MCF 10A (cell line): ENCODE measurements at regions of chr14 and their contacts with region 1.

Region 1: GRCh38 chr14:86961106-86961716 is 1031.8 kb downstream of the GALC start:
- DNase-seq: peak; percentile 34
- H3K4me3 Mint-ChIP-seq: no peak overlapping the region
- H3K27ac Mint-ChIP-seq: no peak overlapping the region
- H3K4me1 Mint-ChIP-seq: no peaks in the 10 kb centered on the region
- H3K27me3 Mint-ChIP-seq: no peaks in the 10 kb centered on the region
- CTCF ChIP-seq: peak; percentile 45

Region 2: DNA sequence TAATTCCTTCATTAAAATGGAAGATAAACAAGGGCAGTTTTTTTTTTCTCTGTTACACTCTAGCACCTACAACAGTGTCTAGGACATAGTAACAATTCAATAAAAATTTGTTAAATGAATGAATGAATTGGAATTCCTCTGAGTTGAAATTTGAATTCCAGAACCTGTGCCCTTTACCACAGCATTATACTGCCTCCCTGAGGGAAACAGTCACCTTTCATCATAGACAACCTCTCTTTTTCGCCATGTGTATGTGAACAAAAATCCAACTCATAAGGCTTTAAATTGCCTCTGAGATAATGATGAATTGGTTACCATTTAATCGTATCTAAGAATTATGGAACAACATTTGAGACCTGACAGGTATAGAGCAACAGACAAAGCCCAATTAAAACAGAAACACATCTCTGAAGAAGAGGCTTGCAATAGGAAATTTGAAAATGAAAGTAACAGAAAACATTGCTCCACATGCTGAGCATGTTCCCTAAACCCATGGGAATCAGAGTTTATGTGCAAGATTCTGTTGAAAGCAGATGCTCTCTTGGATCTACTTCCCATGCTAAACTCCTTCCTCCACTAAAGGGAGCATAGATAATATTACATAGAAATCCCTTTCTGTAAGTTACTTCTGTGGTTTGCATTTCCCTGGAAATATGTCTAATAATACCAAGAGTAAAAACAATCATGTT is 373.9 kb after region 1 on chr14:
- CTCF ChIA-PET with region 1: no interaction called
- POLR2A ChIA-PET with region 1: no interaction called
- intact Hi-C with region 1: loop called (anchors 2 kb)
- DNase-seq: peak; percentile 40
- H3K4me3 Mint-ChIP-seq: peak overlapping the region; percentile 66
- H3K27ac Mint-ChIP-seq: no peak overlapping the region
- H3K4me1 Mint-ChIP-seq: peaks cover 14% of the 10 kb centered on the region
- H3K27me3 Mint-ChIP-seq: no peaks in the 10 kb centered on the region
- CTCF ChIP-seq: peak; percentile 28

Region 3: DNA sequence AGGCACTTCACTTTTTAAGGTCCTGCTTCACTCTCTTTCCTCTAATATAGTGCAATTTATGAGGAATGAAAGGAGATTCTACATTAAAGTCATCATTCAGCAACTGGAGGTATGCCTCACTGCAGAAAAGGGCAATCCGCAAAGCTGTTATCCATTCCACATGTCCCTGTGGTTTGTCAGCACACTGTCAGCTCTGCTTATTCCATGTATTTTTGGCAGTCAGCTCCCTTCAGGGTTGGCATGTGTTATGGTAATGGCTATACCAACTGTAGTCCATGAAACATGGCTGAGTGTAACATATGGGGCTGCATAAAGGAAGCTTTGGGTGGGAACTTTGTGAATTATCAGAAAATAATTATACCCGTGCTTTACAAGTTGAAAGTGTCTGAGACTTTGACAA is 877.7 kb after region 1 on chr14:
- CTCF ChIA-PET with region 1: no interaction called
- POLR2A ChIA-PET with region 1: no interaction called
- intact Hi-C with region 1: no loop called
- DNase-seq: no peak
- H3K4me3 Mint-ChIP-seq: no peak overlapping the region
- H3K27ac Mint-ChIP-seq: no peak overlapping the region
- H3K4me1 Mint-ChIP-seq: no peaks in the 10 kb centered on the region
- H3K27me3 Mint-ChIP-seq: no peaks in the 10 kb centered on the region
- CTCF ChIP-seq: no peak